Gastrocnemius medialis (tissue), 4 donors: ENCODE measurements at regions of chr16 and their contacts with region 1.

Region 1: DNA sequence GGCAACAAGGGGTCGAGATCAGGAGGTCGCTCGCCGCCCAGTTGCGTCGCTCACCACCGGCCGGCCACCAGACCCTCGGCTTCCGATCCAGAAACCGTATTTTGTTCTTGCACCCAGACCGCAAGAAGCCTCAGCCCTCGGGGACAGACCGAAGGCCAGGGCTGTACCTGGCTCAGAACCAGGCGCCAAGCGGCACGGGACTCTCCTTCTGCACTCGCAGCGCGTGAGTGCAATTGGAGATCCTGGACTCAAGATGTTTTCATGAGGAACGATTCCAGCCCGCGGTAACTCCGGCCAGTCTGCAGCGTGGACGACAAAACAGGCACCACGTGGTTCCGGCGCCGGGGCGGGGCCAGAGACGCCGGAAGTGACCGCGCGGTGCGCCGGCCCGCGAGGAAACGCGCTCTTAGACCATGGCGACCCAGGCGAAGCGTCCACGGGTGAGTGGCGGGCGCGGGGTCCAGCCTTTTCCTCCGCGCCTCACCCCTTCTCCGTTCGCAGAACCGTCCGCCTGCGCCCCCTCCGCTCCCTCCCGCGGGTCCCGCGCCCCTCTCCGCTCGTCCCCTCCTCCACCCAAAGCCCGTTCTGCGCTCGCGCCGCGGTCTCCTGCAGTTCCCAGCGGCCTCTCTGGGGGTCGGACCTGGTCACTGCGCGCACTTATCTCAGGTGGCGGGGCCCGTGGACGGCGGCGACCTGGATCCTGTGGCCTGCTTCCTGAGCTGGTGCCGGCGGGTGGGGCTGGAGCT is at the start of gene SETD6:
- DNase-seq: peak; percentile 93 to 94
- ATAC-seq: peak; percentile 87 to 90
- H3K4me3 ChIP-seq: peak within 1 kb of the TSS; percentile 84 to 98 (median 90)
- H3K27ac ChIP-seq: peak within 1 kb of the TSS; percentile 91 to 98 (median 94)
- H3K4me1 ChIP-seq: peaks cover 11 to 21% of the 10 kb centered on the region in 2 donors
- H3K27me3 ChIP-seq: no peaks in the 10 kb centered on the region
- CTCF ChIP-seq: peak in 4 of 5 experiments; percentile 22 to 40 (median 30)
- POLR2A ChIP-seq: peak; percentile 64 to 85
- total RNA-seq, gene SETD6: 30.8 to 40.2 (median 38.4) TPM

Region 2: GRCh38 chr16:58399718-58400633 is 115.3 kb before region 1 on chr16:
- in situ Hi-C with region 1: no loop called
- intact Hi-C with region 1: no loop called
- DNase-seq: no peak
- ATAC-seq: no peak
- H3K4me3 ChIP-seq: no peak overlapping the region
- H3K27ac ChIP-seq: no peak overlapping the region
- H3K4me1 ChIP-seq: no peaks in the 10 kb centered on the region
- H3K27me3 ChIP-seq: no peaks in the 10 kb centered on the region
- CTCF ChIP-seq: no peak
- POLR2A ChIP-seq: no peak

Region 3: GRCh38 chr16:58411742-58412614 is 103.3 kb before region 1 on chr16:
- in situ Hi-C with region 1: no loop called
- intact Hi-C with region 1: no loop called
- DNase-seq: no peak
- ATAC-seq: no peak
- H3K4me3 ChIP-seq: no peak overlapping the region
- H3K27ac ChIP-seq: peak overlapping the region in 1 of 4 donors; percentile 52
- H3K4me1 ChIP-seq: peaks cover 0 to 5% of the 10 kb centered on the region in 2 donors
- H3K27me3 ChIP-seq: no peaks in the 10 kb centered on the region
- CTCF ChIP-seq: no peak
- POLR2A ChIP-seq: no peak

Region 4: GRCh38 chr16:58533751-58534470 is 18.6 kb after region 1 on chr16:
- in situ Hi-C with region 1: no loop called
- intact Hi-C with region 1: loop called (anchors 2 kb)
- DNase-seq: peak in 1 of 2 donors; percentile 64
- ATAC-seq: peak; percentile 64 to 89
- H3K4me3 ChIP-seq: no peak overlapping the region
- H3K27ac ChIP-seq: peak overlapping the region; percentile 49 to 74 (median 68)
- H3K4me1 ChIP-seq: no peaks in the 10 kb centered on the region
- H3K27me3 ChIP-seq: no peaks in the 10 kb centered on the region
- CTCF ChIP-seq: no peak
- POLR2A ChIP-seq: no peak

Region 5: GRCh38 chr16:58578642-58579041 is 63.3 kb after region 1 on chr16:
- in situ Hi-C with region 1: loop called in 2 of 4 experiments (anchors 10 kb)
- intact Hi-C with region 1: no loop called
- DNase-seq: no peak
- ATAC-seq: no peak
- H3K4me3 ChIP-seq: no peak overlapping the region
- H3K27ac ChIP-seq: no peak overlapping the region
- H3K4me1 ChIP-seq: no peaks in the 10 kb centered on the region
- H3K27me3 ChIP-seq: no peaks in the 10 kb centered on the region
- CTCF ChIP-seq: no peak
- POLR2A ChIP-seq: no peak

Region 6: GRCh38 chr16:58629572-58630104 is 114.3 kb after region 1 on chr16 and contains the start of gene CNOT1:
- in situ Hi-C with region 1: loop called in 1 of 4 experiments (anchors 10 kb)
- intact Hi-C with region 1: loop called (anchors 1 kb)
- DNase-seq: peak; percentile 99 to 100
- ATAC-seq: peak; percentile 92 to 96
- H3K4me3 ChIP-seq: peak within 1 kb of the TSS; percentile 85 to 92 (median 88)
- H3K27ac ChIP-seq: peak within 1 kb of the TSS; percentile 94 to 99 (median 96)
- H3K4me1 ChIP-seq: peaks cover 21 to 35% of the 10 kb centered on the region in 2 donors
- H3K27me3 ChIP-seq: no peaks in the 10 kb centered on the region
- CTCF ChIP-seq: peak in 1 of 5 experiments; percentile 15
- POLR2A ChIP-seq: peak; percentile 87 to 89
- total RNA-seq, gene CNOT1: 54.7 to 119 (median 87.2) TPM

Region 7: DNA sequence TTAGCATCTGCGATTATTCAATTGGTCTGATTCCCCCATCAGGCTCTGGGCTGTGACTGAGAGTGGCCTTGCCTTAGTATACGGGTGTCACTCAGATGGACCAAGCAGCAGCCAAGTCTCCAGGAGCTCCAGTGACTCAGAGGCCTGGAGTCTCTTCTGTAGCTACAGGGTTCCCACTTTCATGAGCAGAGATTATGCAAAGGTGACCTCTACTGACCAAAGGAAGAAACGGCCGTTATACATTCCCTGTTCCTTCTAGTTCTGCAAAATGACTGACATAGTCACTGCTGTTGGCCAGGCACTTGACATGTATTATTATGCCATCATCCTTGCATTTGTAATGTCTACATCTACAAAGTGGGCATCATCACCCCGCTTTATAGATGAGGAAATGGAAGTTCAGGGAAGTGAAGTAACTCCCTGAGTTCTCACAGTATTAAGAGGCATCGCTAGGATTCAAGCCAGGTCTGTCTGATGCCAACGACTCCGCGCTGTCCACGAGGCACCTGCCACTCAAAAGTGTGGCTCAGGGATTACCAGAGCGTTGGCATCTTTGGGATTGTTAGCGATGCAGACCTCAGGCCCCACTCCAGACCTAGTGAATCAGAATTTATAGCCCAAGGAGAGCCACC is 146.0 kb after region 1 on chr16:
- in situ Hi-C with region 1: loop called in 1 of 4 experiments (anchors 25 kb)
- intact Hi-C with region 1: loop called (anchors 1 kb)
- DNase-seq: peak; percentile 58 to 77
- ATAC-seq: peak; percentile 100
- H3K4me3 ChIP-seq: no peak overlapping the region
- H3K27ac ChIP-seq: no peak overlapping the region
- H3K4me1 ChIP-seq: no peaks in the 10 kb centered on the region
- H3K27me3 ChIP-seq: no peaks in the 10 kb centered on the region
- CTCF ChIP-seq: peak in 4 of 5 experiments; percentile 36 to 55 (median 46)
- POLR2A ChIP-seq: no peak

Region 8: GRCh38 chr16:58733671-58734458 is 218.6 kb after region 1 on chr16 and contains the start of gene GOT2:
- in situ Hi-C with region 1: loop called in 1 of 4 experiments (anchors 25 kb)
- intact Hi-C with region 1: loop called (anchors 2 kb)
- DNase-seq: peak; percentile 68 to 82
- ATAC-seq: peak; percentile 87 to 88
- H3K4me3 ChIP-seq: peak within 1 kb of the TSS; percentile 79 to 96 (median 90)
- H3K27ac ChIP-seq: peak within 1 kb of the TSS; percentile 85 to 93 (median 92)
- H3K4me1 ChIP-seq: peaks cover 39 to 43% of the 10 kb centered on the region in 2 donors
- H3K27me3 ChIP-seq: no peaks in the 10 kb centered on the region
- CTCF ChIP-seq: peak; percentile 69 to 93 (median 84)
- POLR2A ChIP-seq: peak; percentile 40 to 56
- total RNA-seq, gene GOT2: 135 to 253 (median 195) TPM

Region 9: GRCh38 chr16:58755989-58756649 is 240.8 kb after region 1 on chr16:
- in situ Hi-C with region 1: no loop called
- intact Hi-C with region 1: loop called (anchors 5 kb)
- DNase-seq: peak; percentile 48 to 62
- ATAC-seq: peak; percentile 89 to 94
- H3K4me3 ChIP-seq: no peak overlapping the region
- H3K27ac ChIP-seq: no peak overlapping the region
- H3K4me1 ChIP-seq: peaks cover 0 to 3% of the 10 kb centered on the region in 2 donors
- H3K27me3 ChIP-seq: no peaks in the 10 kb centered on the region
- CTCF ChIP-seq: peak; percentile 48 to 71 (median 64)
- POLR2A ChIP-seq: no peak